ENCODE measurements at regions of chr11 and their contacts with region 1.

Region 1: DNA sequence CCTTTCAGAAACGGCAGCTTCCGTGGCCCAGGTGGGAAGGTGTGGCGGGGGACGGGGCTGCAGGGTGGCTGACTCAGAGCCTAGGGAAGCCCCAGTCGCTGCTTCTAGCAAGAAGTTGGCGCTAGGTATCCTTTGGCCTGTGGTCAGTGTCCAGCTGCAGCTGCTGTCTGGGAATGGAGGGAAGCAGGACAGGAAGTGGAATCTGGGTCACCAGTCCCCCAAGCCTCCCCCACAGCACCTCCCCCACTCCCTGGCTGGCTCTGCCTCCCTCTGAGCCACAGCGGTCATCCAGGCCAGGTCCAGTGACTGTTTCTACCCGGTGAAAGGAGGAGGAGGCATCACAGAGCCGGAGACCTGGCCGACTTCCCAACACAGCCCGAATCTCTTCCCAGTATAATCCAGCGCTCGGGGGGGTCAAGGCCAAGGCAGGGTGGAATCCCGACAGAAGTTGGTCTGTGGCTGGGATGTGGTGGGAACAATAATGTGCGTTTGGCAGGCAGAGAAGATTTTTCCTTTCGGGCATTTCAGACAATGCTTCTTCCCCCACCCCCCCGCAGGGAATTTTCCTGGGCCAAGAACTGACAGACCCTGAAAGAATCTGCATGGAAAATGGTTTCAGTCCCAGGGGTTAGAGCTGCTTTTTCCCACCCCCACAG is 45.1 kb downstream of the C11orf96 start:
- DNase-seq: peak; percentile 96
- ATAC-seq: peak; percentile 88
- H3K4me3 ChIP-seq: no peak overlapping the region
- H3K27ac ChIP-seq: peak overlapping the region; percentile 31 to 70
- H3K4me1 ChIP-seq: no peaks in the 10 kb centered on the region
- H3K27me3 ChIP-seq: no peaks in the 10 kb centered on the region

Region 2: GRCh38 chr11:44029977-44030911 is 42.7 kb after region 1 on chr11:
- intact Hi-C with region 1: loop called (anchors 1 to 10 kb)
- DNase-seq: peak; percentile 83 to 88
- ATAC-seq: peak; percentile 85
- H3K4me3 ChIP-seq: no peak overlapping the region
- H3K27ac ChIP-seq: peak overlapping the region; percentile 98 to 100
- H3K4me1 ChIP-seq: peaks cover 0 to 11% of the 10 kb centered on the region in 2 donors
- H3K27me3 ChIP-seq: no peaks in the 10 kb centered on the region

Region 3: GRCh38 chr11:44036811-44037657 is 49.5 kb after region 1 on chr11:
- intact Hi-C with region 1: loop called (anchors 1 to 10 kb)
- DNase-seq: peak; percentile 91 to 93
- ATAC-seq: peak; percentile 95
- H3K4me3 ChIP-seq: no peak overlapping the region
- H3K27ac ChIP-seq: peak overlapping the region in 1 of 2 donors; percentile 54
- H3K4me1 ChIP-seq: peaks cover 5 to 6% of the 10 kb centered on the region in 2 donors
- H3K27me3 ChIP-seq: no peaks in the 10 kb centered on the region